Activated B cell treated with CpG ODN at 0.5 μM for 24 hours (primary cell): ENCODE measurements at regions of chr2 and their contacts with region 1.

Region 1: DNA sequence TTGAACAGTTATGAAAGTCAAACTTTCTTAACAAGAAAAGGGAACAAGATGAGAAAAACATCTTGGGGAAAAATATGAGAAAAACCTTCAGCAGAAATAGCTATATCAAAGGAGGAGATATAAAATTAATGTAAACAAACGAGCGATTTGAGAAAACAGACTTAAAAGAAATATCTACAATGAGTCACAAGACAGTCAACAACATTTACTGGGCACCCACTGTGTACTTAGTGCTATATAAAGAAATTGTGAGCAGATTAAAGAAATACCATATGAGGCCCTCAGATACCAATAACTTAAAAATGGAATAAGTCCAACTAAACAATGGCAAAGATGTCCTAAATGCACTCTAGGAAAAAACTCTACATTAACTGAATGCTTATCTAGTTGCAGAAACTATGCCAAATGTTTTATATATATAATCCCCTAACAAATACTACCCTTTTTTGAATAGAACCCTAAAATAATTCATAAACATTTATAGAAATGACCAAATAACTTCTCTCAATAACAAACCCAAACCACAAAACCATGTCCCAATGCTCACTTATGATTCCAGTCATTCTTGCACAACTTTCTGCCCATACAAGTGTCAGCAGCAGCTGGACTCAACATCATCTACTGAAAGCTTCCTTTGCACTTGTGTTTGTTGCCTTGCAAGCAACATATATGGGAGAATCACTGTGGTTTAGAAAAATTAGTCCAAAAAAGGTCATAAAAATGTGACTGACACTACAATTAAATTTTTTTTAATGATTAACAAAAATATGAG is 83.5 kb downstream of the COBLL1 start:
- DNase-seq: no peak
- ATAC-seq: no peak
- H3K4me3 Mint-ChIP-seq: peak overlapping the region; percentile 73
- H3K27ac Mint-ChIP-seq: peak overlapping the region; percentile 72
- H3K4me1 Mint-ChIP-seq: peaks cover 80% of the 10 kb centered on the region
- H3K27me3 Mint-ChIP-seq: no peaks in the 10 kb centered on the region
- CTCF ChIP-seq: no peak

Region 2: GRCh38 chr2:164369366-164369765 is 388.7 kb before region 1 on chr2:
- CTCF ChIA-PET with region 1: no interaction called
- POLR2A ChIA-PET with region 1: no interaction called
- intact Hi-C with region 1: no loop called
- DNase-seq: no peak
- ATAC-seq: no peak
- H3K4me3 Mint-ChIP-seq: no peak overlapping the region
- H3K27ac Mint-ChIP-seq: no peak overlapping the region
- H3K4me1 Mint-ChIP-seq: no peaks in the 10 kb centered on the region
- H3K27me3 Mint-ChIP-seq: no peaks in the 10 kb centered on the region
- CTCF ChIP-seq: no peak

Region 3: GRCh38 chr2:164746713-164747112 is 11.4 kb before region 1 on chr2:
- CTCF ChIA-PET with region 1: no interaction called
- POLR2A ChIA-PET with region 1: interaction called, 24 read pairs
- intact Hi-C with region 1: loop called (anchors 1 kb)
- DNase-seq: no peak
- ATAC-seq: peak; percentile 40
- H3K4me3 Mint-ChIP-seq: peak overlapping the region; percentile 68
- H3K27ac Mint-ChIP-seq: peak overlapping the region; percentile 59
- H3K4me1 Mint-ChIP-seq: peaks cover 78% of the 10 kb centered on the region
- H3K27me3 Mint-ChIP-seq: no peaks in the 10 kb centered on the region
- CTCF ChIP-seq: no peak

Region 4: GRCh38 chr2:164826293-164827243 is 68.5 kb after region 1 on chr2:
- CTCF ChIA-PET with region 1: no interaction called
- POLR2A ChIA-PET with region 1: interaction called, 3 read pairs
- intact Hi-C with region 1: loop called (anchors 1 kb)
- DNase-seq: no peak
- ATAC-seq: peak; percentile 91
- H3K4me3 Mint-ChIP-seq: peak overlapping the region; percentile 69
- H3K27ac Mint-ChIP-seq: peak overlapping the region; percentile 85
- H3K4me1 Mint-ChIP-seq: peaks cover 30% of the 10 kb centered on the region
- H3K27me3 Mint-ChIP-seq: no peaks in the 10 kb centered on the region
- CTCF ChIP-seq: no peak

Region 5: DNA sequence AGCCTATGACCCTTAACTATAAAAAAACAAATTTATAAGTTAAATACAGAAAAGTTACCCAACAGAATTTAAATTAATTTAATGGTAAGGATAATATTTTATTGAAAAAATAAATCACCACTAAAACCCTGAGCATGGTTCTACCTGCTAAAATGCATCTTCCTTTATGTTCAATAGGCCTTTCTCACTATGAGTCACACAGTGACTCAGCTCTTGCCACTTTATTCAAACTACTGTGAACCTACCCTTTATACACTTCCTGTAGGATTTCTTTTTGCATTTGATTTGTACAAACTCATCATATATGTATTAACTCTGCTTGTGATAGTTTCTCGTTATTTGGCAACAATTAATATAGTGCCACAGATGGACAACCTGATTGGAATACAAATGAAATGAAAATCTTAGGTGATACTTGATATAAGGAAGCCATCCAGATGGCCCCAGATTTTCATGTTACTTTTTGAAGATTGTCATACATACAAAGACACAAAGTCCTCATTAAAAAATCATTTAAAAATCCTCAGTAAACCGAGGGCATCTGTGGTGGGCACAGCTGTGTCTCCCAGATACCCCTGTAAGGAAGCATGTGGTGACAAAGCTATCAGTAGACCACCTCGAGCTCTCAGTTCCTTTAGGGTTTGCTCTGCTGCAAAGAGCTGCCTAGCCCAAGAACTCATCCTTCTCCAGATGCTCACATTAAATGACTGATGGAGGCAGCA is 138.7 kb after region 1 on chr2:
- CTCF ChIA-PET with region 1: no interaction called
- POLR2A ChIA-PET with region 1: no interaction called
- intact Hi-C with region 1: loop called (anchors 1 kb)
- DNase-seq: no peak
- ATAC-seq: peak; percentile 97
- H3K4me3 Mint-ChIP-seq: no peak overlapping the region
- H3K27ac Mint-ChIP-seq: peak overlapping the region; percentile 68
- H3K4me1 Mint-ChIP-seq: peaks cover 19% of the 10 kb centered on the region
- H3K27me3 Mint-ChIP-seq: no peaks in the 10 kb centered on the region
- CTCF ChIP-seq: no peak

Region 6: DNA sequence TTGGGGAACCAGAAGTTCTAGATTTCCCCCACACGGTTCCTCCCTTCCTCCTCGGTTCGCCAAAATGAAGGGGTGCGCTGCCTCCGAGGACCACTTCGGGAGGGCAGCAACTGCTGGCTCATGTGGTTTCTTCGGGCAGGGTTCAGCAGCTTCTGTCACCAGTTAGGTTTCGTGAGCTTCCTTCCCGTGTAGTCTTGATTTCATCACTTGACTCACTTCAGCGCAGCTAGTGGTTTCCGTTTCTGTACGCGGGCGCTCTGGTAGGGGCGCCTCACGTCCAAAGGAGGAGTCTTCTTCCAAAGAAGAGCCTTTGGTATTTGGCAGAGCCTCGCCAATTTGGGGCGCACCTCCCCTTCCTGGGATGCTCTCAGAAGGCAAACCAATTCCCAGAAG is 1036.4 kb after region 1 on chr2:
- CTCF ChIA-PET with region 1: no interaction called
- POLR2A ChIA-PET with region 1: no interaction called
- intact Hi-C with region 1: loop called (anchors 1 kb)
- DNase-seq: no peak
- ATAC-seq: peak; percentile 87
- H3K4me3 Mint-ChIP-seq: peak overlapping the region; percentile 97
- H3K27ac Mint-ChIP-seq: peak overlapping the region; percentile 96
- H3K4me1 Mint-ChIP-seq: peaks cover 36% of the 10 kb centered on the region
- H3K27me3 Mint-ChIP-seq: no peaks in the 10 kb centered on the region
- CTCF ChIP-seq: no peak